PC-3 (cell line): ENCODE measurements at regions of chr17 and their contacts with region 1.

Region 1: DNA sequence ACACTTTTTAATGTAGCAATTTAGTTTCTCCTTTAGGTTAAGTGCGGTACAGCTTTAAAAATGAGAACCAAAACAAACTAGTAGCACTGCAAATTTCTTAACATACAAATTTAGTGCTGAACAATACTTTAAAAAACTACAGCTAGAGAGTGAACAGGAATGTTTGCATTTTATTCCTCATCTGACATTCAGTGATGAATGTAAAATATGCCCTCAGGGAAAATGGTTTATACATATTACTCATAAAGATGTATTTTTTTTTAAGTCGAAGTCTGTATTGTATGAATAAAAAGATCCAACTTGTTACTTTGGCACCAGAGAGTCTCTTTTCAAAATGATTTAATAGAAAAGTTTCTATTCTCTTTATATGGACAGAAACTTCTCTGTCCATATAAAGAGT is 96.8 kb downstream of the BRIP1 start:
- DNase-seq: peak; percentile 89
- ATAC-seq: peak; percentile 88
- H3K4me3 ChIP-seq: no peak overlapping the region
- H3K27ac ChIP-seq: peak overlapping the region; percentile 27; the same call in 1 of the 2 replicates
- H3K4me1 ChIP-seq: peaks cover 15% of the 10 kb centered on the region
- H3K27me3 ChIP-seq: no peaks in the 10 kb centered on the region
- CTCF ChIP-seq: no peak

Region 2: DNA sequence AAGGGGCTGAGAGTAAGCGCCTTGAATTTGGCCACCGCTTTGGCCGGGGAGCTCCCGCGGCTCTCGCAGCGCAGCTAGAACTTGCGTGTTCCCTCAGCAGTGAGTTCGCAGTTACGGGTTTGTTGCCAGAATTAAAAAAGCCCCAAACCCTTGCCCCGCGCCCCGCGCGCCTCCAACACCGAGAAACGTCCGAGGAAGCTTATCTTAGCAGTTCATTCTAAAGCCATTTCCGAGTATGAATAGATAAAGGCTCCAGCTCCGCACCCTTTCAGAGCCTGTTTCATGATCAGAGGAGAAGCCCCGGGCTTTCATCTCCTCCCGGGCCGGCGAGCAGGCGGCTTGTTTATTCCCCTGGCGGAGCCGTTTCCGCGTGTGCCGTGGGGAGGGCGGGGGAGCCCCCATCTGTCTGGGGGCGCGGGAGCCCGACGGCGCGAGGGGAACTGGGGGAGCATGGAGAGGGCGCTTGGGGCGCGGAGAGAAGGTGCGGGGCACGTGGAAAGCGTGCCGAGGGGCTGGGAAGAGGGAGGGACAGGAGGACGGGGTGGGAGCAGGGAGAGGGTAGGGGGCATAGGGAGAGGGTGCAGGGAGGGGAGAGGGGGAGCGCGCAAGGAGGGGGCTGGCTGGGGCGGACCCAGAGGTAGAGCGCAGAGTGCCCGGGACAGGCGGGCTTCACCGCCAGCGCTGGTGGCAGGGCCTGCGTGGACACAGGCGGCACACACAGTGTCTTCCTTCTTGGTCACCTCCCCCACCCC is 304.4 kb before region 1 on chr17:
- CTCF ChIA-PET with region 1: no interaction called
- POLR2A ChIA-PET with region 1: interaction called, 10 read pairs
- intact Hi-C with region 1: no loop called
- DNase-seq: peak; percentile 20
- ATAC-seq: peak; percentile 54
- H3K4me3 ChIP-seq: peak overlapping the region; percentile 64
- H3K27ac ChIP-seq: no peak overlapping the region
- H3K4me1 ChIP-seq: no peaks in the 10 kb centered on the region
- H3K27me3 ChIP-seq: no peaks in the 10 kb centered on the region
- CTCF ChIP-seq: no peak

Region 3: GRCh38 chr17:61746248-61746985 is 20.1 kb before region 1 on chr17:
- CTCF ChIA-PET with region 1: no interaction called
- POLR2A ChIA-PET with region 1: no interaction called
- intact Hi-C with region 1: no loop called
- DNase-seq: no peak
- ATAC-seq: no peak
- H3K4me3 ChIP-seq: no peak overlapping the region
- H3K27ac ChIP-seq: no peak overlapping the region
- H3K4me1 ChIP-seq: no peaks in the 10 kb centered on the region
- H3K27me3 ChIP-seq: no peaks in the 10 kb centered on the region
- CTCF ChIP-seq: no peak

Region 4: DNA sequence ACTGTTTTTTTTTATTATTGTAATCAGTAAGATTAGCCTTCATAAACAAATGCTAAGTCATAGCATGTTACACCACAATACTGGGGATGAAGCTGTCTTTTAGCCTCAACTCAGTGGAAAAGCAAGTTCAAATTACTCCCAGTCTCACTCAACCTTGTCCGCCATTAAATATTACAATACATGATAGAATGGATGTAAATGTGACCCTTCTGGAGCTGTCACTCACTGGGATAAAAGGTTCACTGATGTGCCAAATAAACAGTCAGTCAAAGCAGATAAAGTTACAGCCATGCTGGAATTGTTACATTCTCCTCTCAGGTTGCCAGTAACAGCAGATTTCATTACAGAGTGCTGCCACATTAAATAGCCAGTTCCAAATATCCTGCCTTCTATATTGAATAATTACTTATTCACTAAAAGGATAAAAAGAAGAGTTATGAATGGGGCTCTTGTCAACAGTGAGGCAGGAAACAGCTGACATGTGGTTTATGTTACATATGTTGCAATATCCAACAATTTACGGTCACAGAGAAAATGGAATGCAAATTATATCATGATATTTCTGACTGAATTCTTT is 43.4 kb after region 1 on chr17:
- CTCF ChIA-PET with region 1: no interaction called
- POLR2A ChIA-PET with region 1: no interaction called
- intact Hi-C with region 1: loop called (anchors 2 kb)
- DNase-seq: peak; percentile 73
- ATAC-seq: peak; percentile 88
- H3K4me3 ChIP-seq: no peak overlapping the region
- H3K27ac ChIP-seq: no peak overlapping the region
- H3K4me1 ChIP-seq: peaks cover 29% of the 10 kb centered on the region
- H3K27me3 ChIP-seq: no peaks in the 10 kb centered on the region
- CTCF ChIP-seq: no peak